ENCODE measurements at regions of chr1 and their contacts with region 1.

Region 1: GRCh38 chr1:179882243-179883039 is at the start of gene TOR1AIP1:
- DNase-seq: peak; percentile 94 to 95
- H3K4me3 ChIP-seq: peak within 1 kb of the TSS; percentile 87 to 92 (median 90)
- H3K27ac ChIP-seq: peak within 1 kb of the TSS; percentile 99
- H3K4me1 ChIP-seq: peaks cover 0 to 3% (median 0%) of the 10 kb centered on the region in 4 experiments; a peak in 1 of 7 replicates
- H3K27me3 ChIP-seq: no peaks in the 10 kb centered on the region
- CTCF ChIP-seq: peak in 1 of 3 experiments; percentile 19; a peak in 2 of 4 replicates
- EP300 ChIP-seq: peak in 1 of 2 experiments; percentile 86; a peak in 1 of 3 replicates
- POLR2A ChIP-seq: peak; percentile 82
- RAD21 ChIP-seq: peak; percentile 3 to 18; a peak in 3 of 4 replicates
- total RNA-seq, gene TOR1AIP1: 22.0 and 22.8 TPM in 2 replicates

Region 2: DNA sequence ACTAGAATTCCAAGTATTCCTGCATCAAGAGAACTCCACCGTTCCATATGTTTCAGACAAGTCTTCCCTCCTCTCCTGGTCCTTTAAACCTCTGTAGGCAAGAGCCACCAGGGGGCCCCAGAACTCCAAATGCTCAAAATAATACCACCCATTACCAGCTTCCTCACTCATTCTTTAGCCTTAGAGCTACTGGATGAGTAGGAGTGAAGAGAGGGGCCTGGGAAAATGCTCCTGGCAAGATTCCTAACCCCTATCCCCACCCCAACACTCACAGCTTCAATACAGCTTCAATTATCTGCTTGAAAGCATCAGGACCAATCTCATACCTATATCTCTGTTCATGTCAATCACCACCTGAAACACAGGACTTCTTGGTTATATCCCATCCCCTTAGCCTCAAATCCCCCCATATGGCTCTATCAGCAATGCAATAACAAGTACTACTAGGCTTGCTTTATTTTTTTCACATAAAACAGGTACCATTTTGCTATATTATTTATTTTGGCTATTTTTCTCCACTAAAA is 14.6 kb before region 1 on chr1:
- CTCF ChIA-PET with region 1: interaction called, 8 read pairs
- POLR2A ChIA-PET with region 1: interaction called, 12 read pairs
- DNase-seq: peak in 1 of 2 experiments; percentile 68
- H3K4me3 ChIP-seq: no peak overlapping the region
- H3K27ac ChIP-seq: no peak overlapping the region
- H3K4me1 ChIP-seq: no peaks in the 10 kb centered on the region
- H3K27me3 ChIP-seq: no peaks in the 10 kb centered on the region
- CTCF ChIP-seq: peak in 2 of 3 experiments; percentile 65 to 71; a peak in 3 of 4 replicates
- EP300 ChIP-seq: no peak
- POLR2A ChIP-seq: no peak
- RAD21 ChIP-seq: peak; percentile 63 to 80

Region 3: GRCh38 chr1:179954493-179955297 is 72.3 kb after region 1 on chr1 and contains the start of gene CEP350:
- CTCF ChIA-PET with region 1: interaction called, 7 read pairs
- POLR2A ChIA-PET with region 1: interaction called, 16 read pairs
- DNase-seq: peak; percentile 95 to 97
- H3K4me3 ChIP-seq: peak within 1 kb of the TSS; percentile 74 to 90 (median 83)
- H3K27ac ChIP-seq: peak within 1 kb of the TSS; percentile 85
- H3K4me1 ChIP-seq: peaks cover 0 to 4% (median 0%) of the 10 kb centered on the region in 4 experiments; a peak in 2 of 7 replicates
- H3K27me3 ChIP-seq: no peaks in the 10 kb centered on the region
- CTCF ChIP-seq: no peak
- EP300 ChIP-seq: peak in 1 of 2 experiments; percentile 37; a peak in 1 of 3 replicates
- POLR2A ChIP-seq: peak; percentile 65 to 92
- RAD21 ChIP-seq: no peak
- total RNA-seq, gene CEP350: 39.0 and 39.4 TPM in 2 replicates

Measured in H1 (cell line).